Breast epithelium (tissue), 4 donors: ENCODE measurements at regions of chr3 and their contacts with region 1.

Region 1: DNA sequence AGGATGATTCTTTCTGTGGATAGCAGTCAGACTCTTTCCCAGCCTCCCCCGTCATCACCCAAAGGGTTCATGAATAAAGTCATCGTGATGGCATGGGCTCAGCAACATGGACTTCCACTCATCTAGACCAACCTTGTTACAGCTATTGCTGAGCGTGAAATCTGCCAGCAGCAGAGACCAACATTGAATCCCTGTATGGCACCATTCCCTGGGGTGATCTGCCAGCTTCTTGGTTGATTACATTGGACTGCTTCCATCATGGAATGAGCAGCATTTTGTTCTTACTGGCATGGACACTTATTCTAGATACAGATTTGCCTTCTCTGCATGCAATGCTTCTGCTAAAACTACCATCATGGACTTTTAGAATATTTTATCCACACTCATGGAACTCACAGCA is 195.6 kb upstream of the AZI2 start:
- DNase-seq: no peak
- H3K4me3 ChIP-seq: no peak overlapping the region
- H3K27ac ChIP-seq: no peak overlapping the region
- H3K4me1 ChIP-seq: no peaks in the 10 kb centered on the region
- H3K27me3 ChIP-seq: no peaks in the 10 kb centered on the region
- CTCF ChIP-seq: no peak
- POLR2A ChIP-seq: no peak

Region 2: DNA sequence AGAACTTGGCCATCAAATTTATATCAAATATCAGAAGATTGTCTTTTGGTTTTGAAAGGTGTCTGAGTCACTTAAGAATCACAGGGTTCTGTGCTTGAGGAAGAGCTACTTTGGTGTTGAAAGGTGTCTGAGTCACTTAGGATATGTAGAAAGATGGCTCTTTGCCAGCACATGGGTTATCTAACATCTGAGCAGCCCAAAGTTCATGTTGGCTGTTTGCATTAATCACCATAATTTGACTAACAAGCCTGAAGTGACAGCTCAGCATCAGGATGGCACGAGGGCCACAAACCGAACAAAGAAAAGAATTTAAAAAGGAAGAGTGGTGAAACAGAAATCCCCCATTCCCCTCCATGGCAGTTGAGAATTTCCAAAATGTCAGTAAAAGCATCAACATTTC is 493.3 kb before region 1 on chr3:
- intact Hi-C with region 1: loop called (anchors 5 kb)
- DNase-seq: no peak
- H3K4me3 ChIP-seq: no peak overlapping the region
- H3K27ac ChIP-seq: no peak overlapping the region
- H3K4me1 ChIP-seq: no peaks in the 10 kb centered on the region
- H3K27me3 ChIP-seq: no peaks in the 10 kb centered on the region
- CTCF ChIP-seq: no peak
- POLR2A ChIP-seq: no peak

Region 3: DNA sequence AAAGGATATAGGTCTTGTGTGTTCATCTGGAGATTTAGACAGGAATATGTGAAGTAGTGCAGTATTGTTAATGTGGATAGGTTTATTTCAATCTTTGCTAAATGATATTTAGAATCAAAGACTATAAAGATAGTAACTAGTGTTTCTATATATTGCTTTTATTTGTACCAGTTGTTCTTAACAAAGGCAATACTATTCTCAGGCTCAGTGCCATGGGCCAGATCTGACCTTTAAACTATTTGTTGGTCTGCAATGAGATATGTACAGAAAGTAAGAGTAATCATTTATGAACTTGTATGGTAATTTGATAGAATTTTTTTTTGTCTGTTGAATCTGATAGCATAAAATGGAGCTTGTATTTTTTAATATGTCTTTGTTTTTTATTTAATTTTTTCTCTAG is 48.9 kb before region 1 on chr3:
- intact Hi-C with region 1: no loop called
- DNase-seq: no peak
- H3K4me3 ChIP-seq: no peak overlapping the region
- H3K27ac ChIP-seq: no peak overlapping the region
- H3K4me1 ChIP-seq: no peaks in the 10 kb centered on the region
- H3K27me3 ChIP-seq: no peaks in the 10 kb centered on the region
- CTCF ChIP-seq: no peak
- POLR2A ChIP-seq: no peak